Cardiac septum (tissue), 1 donor: ENCODE measurements at regions of chr13 and their contacts with region 1.

Region 1: DNA sequence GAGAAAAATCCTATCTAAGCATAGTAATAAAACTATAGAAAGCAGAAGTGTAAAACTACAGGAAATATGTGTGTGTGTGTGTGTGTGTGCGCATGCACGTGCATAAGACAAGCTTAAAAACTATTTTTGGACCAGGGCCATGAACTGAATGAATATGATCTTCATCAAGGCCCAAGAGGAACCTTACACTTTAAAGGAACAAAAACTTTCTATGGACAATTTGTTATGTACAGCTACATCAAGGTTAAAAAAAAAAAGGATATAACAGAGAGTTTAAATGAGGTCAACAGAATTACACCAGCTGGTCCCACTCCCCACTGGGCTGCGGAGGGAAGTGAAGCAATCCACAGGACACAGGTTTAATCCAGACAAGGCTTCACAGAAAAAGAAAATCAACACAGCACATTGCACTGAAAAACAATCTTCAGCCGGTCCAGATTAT is 151.1 kb downstream of the LHFPL6 start:
- DNase-seq: no peak

Region 2: GRCh38 chr13:39415008-39415802 is 36.7 kb before region 1 on chr13:
- intact Hi-C with region 1: loop called (anchors 2 kb)
- DNase-seq: no peak

Region 3: GRCh38 chr13:39516096-39516495 is 64.2 kb after region 1 on chr13:
- intact Hi-C with region 1: loop called (anchors 5 kb)
- DNase-seq: no peak

Region 4: GRCh38 chr13:39557285-39557955 is 105.5 kb after region 1 on chr13:
- intact Hi-C with region 1: no loop called
- DNase-seq: no peak

Region 5: DNA sequence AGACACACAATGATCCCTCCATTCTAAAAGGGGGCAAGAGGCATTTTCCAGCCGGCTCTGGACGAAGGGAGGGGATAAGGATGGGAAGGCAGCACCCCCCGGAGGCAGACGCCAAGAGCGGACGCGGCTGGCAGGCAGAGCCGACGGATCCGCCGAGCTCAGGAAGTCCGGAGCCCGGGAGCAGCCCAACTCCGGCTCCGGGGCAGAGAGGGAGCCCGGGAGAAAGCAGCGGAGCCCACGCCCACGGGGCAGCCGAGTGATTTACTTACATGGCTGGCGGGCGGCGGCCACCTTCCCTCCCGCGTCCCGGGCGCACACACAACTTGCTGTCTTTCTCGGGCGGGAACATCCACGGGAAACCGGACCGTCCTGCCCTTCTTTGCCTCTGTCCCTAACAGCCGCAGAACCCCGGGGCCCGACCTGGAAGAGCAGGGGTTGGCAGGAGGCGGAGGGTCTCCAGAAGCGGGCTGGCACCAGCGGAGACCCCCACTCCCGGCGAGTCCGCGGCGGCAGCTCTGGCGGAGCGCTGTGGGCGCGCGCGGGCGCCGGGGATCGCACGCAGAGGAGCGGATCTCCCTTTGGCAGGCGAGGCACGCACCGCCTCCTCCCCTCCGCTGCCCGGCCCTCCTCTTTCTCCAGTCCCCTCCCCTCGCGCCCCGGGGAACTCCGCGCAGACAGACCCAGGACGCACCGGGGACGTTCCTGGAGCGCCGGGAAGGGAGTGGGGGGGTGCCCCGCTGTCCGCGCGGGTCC is 150.9 kb after region 1 on chr13 and contains the start of gene LHFPL6:
- intact Hi-C with region 1: loop called (anchors 2 kb)
- DNase-seq: peak; percentile 93
- total RNA-seq, gene LHFPL6: 68.9 TPM